Spleen (tissue), 13 donors: ENCODE measurements at regions of chr3 and their contacts with region 1.

Region 1: GRCh38 chr3:141738022-141738890 is at the start of gene RNF7:
- DNase-seq: peak; percentile 99
- H3K4me3 ChIP-seq: peak within 1 kb of the TSS; percentile 79 to 99 (median 92)
- H3K27ac ChIP-seq: peak within 1 kb of the TSS; percentile 92 to 99 (median 94)
- H3K4me1 ChIP-seq: peaks cover 28 to 54% (median 50%) of the 10 kb centered on the region in 6 donors
- H3K27me3 ChIP-seq: no peaks in the 10 kb centered on the region
- CTCF ChIP-seq: peak; percentile 86 to 100 (median 99)
- POLR2A ChIP-seq: peak in 1 of 3 donors; percentile 39
- total RNA-seq, gene RNF7: 42.5 to 66.1 (median 55.9) TPM

Region 2: DNA sequence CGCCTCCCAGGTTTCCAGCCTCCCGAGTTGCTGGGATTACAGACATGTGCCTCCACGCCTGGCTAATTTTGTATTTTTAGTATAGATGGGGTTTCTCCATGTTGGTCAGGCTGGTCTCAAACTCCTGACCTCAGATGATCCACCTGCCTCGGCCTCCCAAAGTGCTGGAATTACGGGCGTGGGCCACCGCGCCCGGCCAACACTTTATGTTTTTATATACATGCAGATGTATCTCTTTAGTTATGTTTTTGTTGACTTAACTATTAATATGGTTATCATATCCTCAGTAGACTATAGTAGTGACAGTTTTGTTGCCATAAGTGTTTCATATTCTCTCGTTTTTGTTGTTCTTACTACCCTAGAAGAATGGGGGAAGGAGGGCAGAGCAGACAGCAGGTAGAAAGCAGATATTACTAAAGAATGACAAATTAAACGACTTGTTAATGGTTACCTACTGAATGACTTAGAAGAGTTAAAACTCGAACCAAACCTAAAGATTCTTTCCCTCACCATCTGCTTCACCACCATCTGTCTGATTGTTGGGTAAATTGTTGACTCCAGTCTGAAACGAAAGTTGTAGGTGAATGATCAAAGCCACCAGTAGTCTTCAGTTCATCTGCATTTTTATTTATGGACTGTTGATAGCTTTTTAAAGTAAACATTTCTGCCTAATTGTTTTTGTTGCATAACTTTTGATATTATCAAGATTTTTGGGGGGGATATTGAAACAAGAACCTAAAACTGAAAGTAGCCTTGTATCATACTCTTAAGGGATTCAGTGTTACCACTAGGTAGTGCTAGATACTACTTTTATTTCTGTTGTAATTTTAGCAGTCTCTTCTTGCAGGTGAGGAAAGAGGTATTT is 162.1 kb before region 1 on chr3:
- intact Hi-C with region 1: loop called (anchors 10 kb)
- DNase-seq: no peak
- H3K4me3 ChIP-seq: no peak overlapping the region
- H3K27ac ChIP-seq: peak overlapping the region in 3 of 8 donors; percentile 6 to 45 (median 31)
- H3K4me1 ChIP-seq: peaks cover 0 to 16% (median 8%) of the 10 kb centered on the region in 6 donors
- H3K27me3 ChIP-seq: no peaks in the 10 kb centered on the region
- CTCF ChIP-seq: peak in 8 of 11 experiments; percentile 37 to 70 (median 55)
- POLR2A ChIP-seq: no peak

Region 3: GRCh38 chr3:141644931-141645330 is 93.3 kb before region 1 on chr3:
- intact Hi-C with region 1: no loop called
- DNase-seq: peak; percentile 94
- H3K4me3 ChIP-seq: no peak overlapping the region
- H3K27ac ChIP-seq: no peak overlapping the region
- H3K4me1 ChIP-seq: peaks cover 0 to 8% (median 1%) of the 10 kb centered on the region in 6 donors
- H3K27me3 ChIP-seq: no peaks in the 10 kb centered on the region
- CTCF ChIP-seq: peak; percentile 59 to 88 (median 74)
- POLR2A ChIP-seq: no peak

Region 4: DNA sequence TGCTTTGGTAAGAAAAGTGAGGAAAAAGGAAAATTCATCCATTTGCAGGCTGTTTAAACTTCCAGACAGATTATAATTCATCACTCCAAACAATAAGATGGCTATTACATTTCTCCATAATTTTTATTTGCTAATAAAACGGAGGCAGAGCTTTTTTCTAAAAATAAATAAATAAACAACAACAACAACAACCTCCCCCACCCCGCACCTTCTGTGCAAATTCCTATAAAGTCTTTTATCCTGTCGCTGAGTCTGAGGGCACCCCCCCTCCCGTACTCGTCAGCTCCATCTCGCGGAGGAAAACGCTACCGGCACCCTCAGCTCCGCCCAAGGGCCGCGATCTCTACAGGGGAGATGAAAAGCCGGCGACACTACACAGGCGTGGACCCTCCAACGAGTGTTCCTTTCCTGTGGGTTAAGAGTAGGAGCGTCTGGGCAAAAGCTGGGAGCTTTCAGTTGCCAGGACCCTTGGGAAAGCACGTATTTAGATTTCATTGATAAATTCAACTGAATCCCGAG is 137.2 kb after region 1 on chr3:
- intact Hi-C with region 1: loop called (anchors 5 kb)
- DNase-seq: peak; percentile 96
- H3K4me3 ChIP-seq: peak overlapping the region; percentile 58 to 97 (median 85)
- H3K27ac ChIP-seq: peak overlapping the region; percentile 94 to 100 (median 99)
- H3K4me1 ChIP-seq: peaks cover 19 to 43% (median 29%) of the 10 kb centered on the region in 6 donors
- H3K27me3 ChIP-seq: no peaks in the 10 kb centered on the region
- CTCF ChIP-seq: peak; percentile 70 to 95 (median 89)
- POLR2A ChIP-seq: no peak

Region 5: GRCh38 chr3:141913150-141913811 is 175.0 kb after region 1 on chr3:
- intact Hi-C with region 1: loop called (anchors 10 kb)
- DNase-seq: no peak
- H3K4me3 ChIP-seq: no peak overlapping the region
- H3K27ac ChIP-seq: no peak overlapping the region
- H3K4me1 ChIP-seq: no peaks in the 10 kb centered on the region
- H3K27me3 ChIP-seq: no peaks in the 10 kb centered on the region
- CTCF ChIP-seq: peak; percentile 42 to 73 (median 66)
- POLR2A ChIP-seq: no peak